OCI-LY7 (cell line): ENCODE measurements at regions of chr19 and their contacts with region 1.

Region 1: GRCh38 chr19:58519355-58520256 is at the start of gene ZBTB45:
- DNase-seq: peak; percentile 98
- H3K4me3 ChIP-seq: peak within 1 kb of the TSS; percentile 87
- H3K27ac ChIP-seq: peak within 1 kb of the TSS; percentile 80
- H3K4me1 ChIP-seq: peaks cover 14% of the 10 kb centered on the region
- CTCF ChIP-seq: peak; percentile 77
- total RNA-seq, gene ZBTB45: 6.7 and 10.7 TPM in 2 replicates

Region 2: DNA sequence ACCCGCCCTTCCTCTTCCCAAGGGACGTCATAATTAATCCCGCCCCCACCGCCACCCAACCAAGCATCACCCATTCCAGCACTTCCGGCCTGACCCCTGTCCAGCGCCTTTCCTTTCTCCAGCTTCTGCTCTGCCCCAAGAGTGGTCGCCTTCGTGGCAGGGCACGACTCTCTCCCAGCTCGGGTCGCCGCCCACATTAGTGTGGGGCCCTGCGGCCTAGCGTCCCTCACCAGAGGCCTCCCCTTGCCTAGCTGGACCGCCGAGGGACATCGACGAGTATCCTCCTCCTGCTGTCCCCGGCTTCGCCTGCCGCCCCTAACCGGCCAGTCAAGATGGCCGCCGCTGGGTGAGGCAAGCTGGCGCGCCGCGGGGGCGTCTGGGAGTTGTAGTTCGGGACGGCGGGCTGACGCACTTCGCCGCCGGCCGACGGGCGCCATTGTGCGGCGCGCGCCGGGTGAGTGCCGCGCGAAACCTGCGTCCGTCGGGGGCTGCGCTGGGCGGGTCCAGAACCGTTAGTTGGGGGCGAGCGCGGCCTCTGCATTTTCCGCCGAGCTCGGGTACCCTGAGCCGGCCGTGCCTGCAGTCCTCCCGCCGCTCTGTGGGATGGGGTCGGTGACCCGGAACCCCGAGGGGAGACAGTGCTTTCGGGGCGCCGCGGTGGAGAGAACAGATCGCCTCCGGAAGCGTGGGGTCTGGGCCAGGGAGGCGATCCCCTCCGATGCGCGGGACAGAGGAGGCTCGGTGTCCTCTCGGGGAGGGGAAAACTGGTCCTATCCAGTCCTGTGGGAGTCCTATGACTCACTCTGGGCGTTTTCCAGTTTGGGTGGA is 336.4 kb before region 1 on chr19 and contains the start of gene ZNF274:
- CTCF ChIA-PET with region 1: no interaction called
- POLR2A ChIA-PET with region 1: no interaction called
- intact Hi-C with region 1: loop called (anchors 2 kb)
- DNase-seq: peak; percentile 96
- H3K4me3 ChIP-seq: peak within 1 kb of the TSS; percentile 85
- H3K27ac ChIP-seq: peak within 1 kb of the TSS; percentile 86
- H3K4me1 ChIP-seq: peaks cover 12% of the 10 kb centered on the region
- CTCF ChIP-seq: no peak
- total RNA-seq, gene ZNF274: 36.4 and 68.3 TPM in 2 replicates

Region 3: GRCh38 chr19:58326914-58327726 is 192.5 kb before region 1 on chr19 and contains the start of gene ZSCAN22:
- CTCF ChIA-PET with region 1: no interaction called
- POLR2A ChIA-PET with region 1: interaction called, 3 read pairs
- intact Hi-C with region 1: loop called (anchors 5 kb)
- DNase-seq: peak; percentile 95
- H3K4me3 ChIP-seq: peak within 1 kb of the TSS; percentile 82
- H3K27ac ChIP-seq: peak within 1 kb of the TSS; percentile 13
- H3K4me1 ChIP-seq: peaks cover 16% of the 10 kb centered on the region
- CTCF ChIP-seq: no peak
- total RNA-seq, gene ZSCAN22: 2.6 and 3.3 TPM in 2 replicates

Region 4: GRCh38 chr19:58451358-58452101 is 68.1 kb before region 1 on chr19 and contains the start of gene ZNF324B:
- CTCF ChIA-PET with region 1: no interaction called
- POLR2A ChIA-PET with region 1: no interaction called
- intact Hi-C with region 1: loop called (anchors 2 kb)
- DNase-seq: peak; percentile 98
- H3K4me3 ChIP-seq: peak within 1 kb of the TSS; percentile 73
- H3K27ac ChIP-seq: no peak within 1 kb of the TSS
- H3K4me1 ChIP-seq: no peaks in the 10 kb centered on the region
- CTCF ChIP-seq: 0 out of 2 replicates have a peak, but pooled peaks have one; percentile 32
- total RNA-seq, gene ZNF324B: 10.6 and 13.8 TPM in 2 replicates

Region 5: GRCh38 chr19:58492265-58492664 is 27.3 kb before region 1 on chr19:
- CTCF ChIA-PET with region 1: no interaction called
- POLR2A ChIA-PET with region 1: no interaction called
- intact Hi-C with region 1: no loop called
- DNase-seq: no peak
- H3K4me3 ChIP-seq: no peak overlapping the region
- H3K27ac ChIP-seq: no peak overlapping the region
- H3K4me1 ChIP-seq: no peaks in the 10 kb centered on the region
- CTCF ChIP-seq: no peak

Region 6: GRCh38 chr19:58558623-58559274 is 39.1 kb after region 1 on chr19:
- CTCF ChIA-PET with region 1: interaction called, 7 read pairs
- POLR2A ChIA-PET with region 1: interaction called, 3 read pairs
- intact Hi-C with region 1: loop called (anchors 1 kb)
- DNase-seq: peak; percentile 99
- H3K4me3 ChIP-seq: peak overlapping the region; percentile 88
- H3K27ac ChIP-seq: peak overlapping the region; percentile 89
- H3K4me1 ChIP-seq: peaks cover 49% of the 10 kb centered on the region
- CTCF ChIP-seq: no peak

Region 7: GRCh38 chr19:58586133-58586769 is 66.6 kb after region 1 on chr19:
- CTCF ChIA-PET with region 1: no interaction called
- POLR2A ChIA-PET with region 1: no interaction called
- intact Hi-C with region 1: no loop called
- DNase-seq: no peak
- H3K4me3 ChIP-seq: no peak overlapping the region
- H3K27ac ChIP-seq: no peak overlapping the region
- H3K4me1 ChIP-seq: no peaks in the 10 kb centered on the region
- CTCF ChIP-seq: no peak